Common myeloid progenitor, CD34-positive (primary cell): ENCODE measurements at regions of chr4 and their contacts with region 1.

Region 1: GRCh38 chr4:155772459-155773195 is 13.8 kb downstream of the GUCY1B1 start:
- DNase-seq: no peak
- H3K4me3 ChIP-seq: no peak overlapping the region
- H3K27ac ChIP-seq: no peak overlapping the region
- H3K4me1 ChIP-seq: peaks cover 0 to 11% (median 5%) of the 10 kb centered on the region in 4 experiments
- H3K27me3 ChIP-seq: no peaks in the 10 kb centered on the region

Region 2: GRCh38 chr4:155762334-155762733 is 10.3 kb before region 1 on chr4:
- CTCF ChIA-PET with region 1: interaction called, 16 read pairs
- POLR2A ChIA-PET with region 1: interaction called, 3 read pairs
- DNase-seq: no peak
- H3K4me3 ChIP-seq: peak overlapping the region in 1 of 7 experiments; percentile 49
- H3K27ac ChIP-seq: no peak overlapping the region
- H3K4me1 ChIP-seq: peaks cover 5 to 62% (median 17%) of the 10 kb centered on the region in 4 experiments
- H3K27me3 ChIP-seq: no peaks in the 10 kb centered on the region

Region 3: DNA sequence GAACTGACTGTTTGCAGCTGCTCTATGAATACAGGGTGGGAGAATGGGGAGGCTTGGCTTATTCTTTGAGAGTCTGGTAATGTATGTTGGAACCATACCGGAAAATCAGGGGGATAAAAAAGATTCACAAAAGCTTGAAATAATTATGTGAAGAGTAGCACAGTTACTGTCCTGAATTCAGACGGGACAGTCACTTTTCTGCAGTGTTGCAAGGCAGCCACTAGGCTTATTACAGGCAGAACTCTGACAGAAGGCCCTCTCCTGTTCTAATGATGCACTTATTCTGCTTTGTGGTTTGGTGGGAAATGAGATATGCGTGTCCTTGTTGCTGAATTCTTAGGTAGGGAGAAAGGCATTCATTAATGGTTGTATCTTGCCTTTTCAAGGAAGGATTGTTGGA is 23.4 kb after region 1 on chr4:
- CTCF ChIA-PET with region 1: interaction called, 10 read pairs
- POLR2A ChIA-PET with region 1: no interaction called
- DNase-seq: peak; percentile 43 to 71 (median 63)
- H3K4me3 ChIP-seq: no peak overlapping the region
- H3K27ac ChIP-seq: no peak overlapping the region
- H3K4me1 ChIP-seq: no peaks in the 10 kb centered on the region
- H3K27me3 ChIP-seq: no peaks in the 10 kb centered on the region